CD4-positive, alpha-beta T cell (primary cell): ENCODE measurements at regions of chr1 and their contacts with region 1.

Region 1: DNA sequence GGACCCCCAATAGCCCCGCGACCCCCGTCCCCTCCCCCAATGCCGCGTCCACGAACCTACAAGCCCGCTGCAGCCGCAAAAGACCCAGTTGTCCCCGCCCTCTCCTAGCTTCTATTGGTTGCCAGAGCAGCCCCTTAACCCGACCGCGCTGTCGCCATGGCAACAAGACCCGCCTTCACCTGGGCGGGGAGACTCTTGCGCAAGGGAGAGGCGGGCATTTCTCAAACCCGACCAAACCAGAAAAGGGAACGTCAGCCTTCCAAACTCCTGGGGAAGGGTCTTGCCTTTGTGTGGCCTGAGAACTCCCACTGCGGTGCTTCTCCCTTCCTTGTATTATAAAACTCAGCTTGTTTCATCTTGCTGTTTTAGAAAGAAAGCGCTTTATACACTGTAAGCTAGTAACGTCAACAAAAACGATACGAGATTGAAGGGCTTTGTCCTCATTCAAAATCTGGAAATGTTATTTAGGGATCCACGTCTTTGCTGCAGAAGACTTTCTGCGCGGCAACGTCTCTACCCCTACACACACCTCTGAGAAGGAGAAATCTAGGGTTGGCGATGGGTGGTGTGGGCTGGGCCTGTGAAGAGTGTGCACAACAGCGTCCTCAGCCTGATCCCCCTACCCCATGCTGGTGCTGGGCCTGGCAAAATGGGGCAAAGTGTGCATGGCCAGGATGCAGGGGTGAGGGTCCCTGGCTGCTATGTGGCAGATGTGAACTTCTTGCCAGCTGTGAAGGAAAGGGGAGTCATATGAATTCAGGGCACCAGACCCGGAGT is at the start of gene TMEM9:
- DNase-seq: peak; percentile 97 to 100 (median 99)
- ATAC-seq: peak; percentile 97
- H3K4me3 ChIP-seq: peak within 1 kb of the TSS; percentile 84
- H3K4me3 Mint-ChIP-seq: peak within 1 kb of the TSS; percentile 91
- H3K27ac ChIP-seq: peak within 1 kb of the TSS in 1 of 2 donors; percentile 47
- H3K27ac Mint-ChIP-seq: peak within 1 kb of the TSS; percentile 76
- H3K4me1 ChIP-seq: peaks cover 18% of the 10 kb centered on the region
- H3K4me1 Mint-ChIP-seq: peaks cover 32% of the 10 kb centered on the region
- H3K27me3 ChIP-seq: no peaks in the 10 kb centered on the region
- H3K27me3 Mint-ChIP-seq: peaks cover 10% of the 10 kb centered on the region
- CTCF ChIP-seq: no peak
- total RNA-seq, gene TMEM9: 15.7 to 16.5 TPM

Region 2: GRCh38 chr1:200409761-200410565 is 744.6 kb before region 1 on chr1 and contains the start of gene ZNF281:
- CTCF ChIA-PET with region 1: no interaction called
- POLR2A ChIA-PET with region 1: no interaction called
- intact Hi-C with region 1: loop called in 1 of 2 experiments (anchors 10 kb)
- DNase-seq: peak; percentile 86 to 97 (median 92)
- ATAC-seq: peak; percentile 96
- H3K4me3 ChIP-seq: peak within 1 kb of the TSS; percentile 93
- H3K4me3 Mint-ChIP-seq: peak within 1 kb of the TSS; percentile 98
- H3K27ac ChIP-seq: peak within 1 kb of the TSS; percentile 68 to 81
- H3K27ac Mint-ChIP-seq: peak within 1 kb of the TSS; percentile 87
- H3K4me1 ChIP-seq: peaks cover 25% of the 10 kb centered on the region
- H3K4me1 Mint-ChIP-seq: peaks cover 56% of the 10 kb centered on the region
- H3K27me3 ChIP-seq: no peaks in the 10 kb centered on the region
- H3K27me3 Mint-ChIP-seq: no peaks in the 10 kb centered on the region
- CTCF ChIP-seq: no peak
- total RNA-seq, gene ZNF281: 27.6 to 29.3 TPM

Region 3: GRCh38 chr1:200738740-200739498 is 415.7 kb before region 1 on chr1 and contains the start of gene CAMSAP2:
- CTCF ChIA-PET with region 1: no interaction called
- POLR2A ChIA-PET with region 1: no interaction called
- intact Hi-C with region 1: loop called in 1 of 2 experiments (anchors 10 kb)
- DNase-seq: peak; percentile 30 to 90 (median 60)
- ATAC-seq: peak; percentile 67
- H3K4me3 ChIP-seq: peak within 1 kb of the TSS; percentile 93
- H3K4me3 Mint-ChIP-seq: peak within 1 kb of the TSS; percentile 100
- H3K27ac ChIP-seq: peak within 1 kb of the TSS; percentile 29 to 36
- H3K27ac Mint-ChIP-seq: peak within 1 kb of the TSS; percentile 90
- H3K4me1 ChIP-seq: peaks cover 17% of the 10 kb centered on the region
- H3K4me1 Mint-ChIP-seq: peaks cover 46% of the 10 kb centered on the region
- H3K27me3 ChIP-seq: no peaks in the 10 kb centered on the region
- H3K27me3 Mint-ChIP-seq: no peaks in the 10 kb centered on the region
- CTCF ChIP-seq: no peak
- total RNA-seq, gene CAMSAP2: 4.4 to 5.7 TPM

Region 4: DNA sequence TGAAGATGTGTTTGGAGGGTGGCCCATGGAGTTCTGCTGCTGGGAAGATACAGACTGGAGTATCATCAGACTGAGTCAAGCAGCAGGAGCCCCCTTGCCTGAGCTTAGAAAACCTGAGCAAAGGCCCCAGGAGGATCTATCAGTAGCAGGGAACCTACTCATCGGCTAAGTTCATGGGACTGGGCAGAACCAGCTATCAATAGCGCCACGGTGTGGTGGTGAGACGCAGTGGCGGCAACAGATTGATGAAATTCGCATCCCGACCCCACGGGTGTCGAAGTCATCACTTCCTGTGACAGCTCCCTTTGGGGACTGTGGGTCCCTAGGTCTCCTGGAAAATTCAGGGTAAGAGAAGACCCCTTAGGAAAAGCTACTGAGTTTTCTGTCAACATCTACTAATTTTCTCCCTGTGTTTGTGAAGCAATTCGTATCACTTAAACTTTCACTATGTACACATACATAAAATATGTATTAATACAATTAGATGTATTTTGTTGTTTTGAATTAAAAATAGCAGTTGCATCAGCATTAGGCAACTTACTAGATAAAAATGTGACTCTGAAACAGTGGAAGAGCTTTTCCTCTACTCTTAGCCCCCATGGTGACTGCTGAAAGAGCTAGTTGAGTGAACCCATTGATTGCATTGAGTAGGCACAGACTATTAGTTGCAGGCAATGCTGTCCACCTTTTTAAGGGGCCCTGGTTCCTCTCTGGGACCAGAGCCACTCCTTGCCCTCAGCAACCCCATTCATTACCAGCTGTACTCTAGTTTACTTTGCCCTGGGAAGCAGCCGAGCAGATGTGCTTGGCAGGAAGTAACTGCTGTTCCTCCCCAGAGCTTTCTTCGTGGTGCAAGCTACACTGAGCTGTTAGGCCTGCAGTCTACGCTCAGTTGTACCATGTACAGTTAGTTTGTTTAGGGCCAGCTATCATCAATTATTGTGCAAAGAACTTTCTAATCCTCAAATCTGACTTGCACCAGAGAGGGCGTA is 35.1 kb before region 1 on chr1:
- CTCF ChIA-PET with region 1: interaction called, 6 read pairs
- POLR2A ChIA-PET with region 1: interaction called, 8 read pairs
- intact Hi-C with region 1: loop called in 1 of 2 experiments (anchors 2 kb)
- DNase-seq: peak in 13 of 14 experiments; percentile 22 to 74 (median 42)
- ATAC-seq: peak; percentile 50
- H3K4me3 ChIP-seq: no peak overlapping the region
- H3K4me3 Mint-ChIP-seq: no peak overlapping the region
- H3K27ac ChIP-seq: no peak overlapping the region
- H3K27ac Mint-ChIP-seq: no peak overlapping the region
- H3K4me1 ChIP-seq: peaks cover 14% of the 10 kb centered on the region
- H3K4me1 Mint-ChIP-seq: peaks cover 29% of the 10 kb centered on the region
- H3K27me3 ChIP-seq: peaks cover 3 to 7% of the 10 kb centered on the region in 2 experiments
- H3K27me3 Mint-ChIP-seq: peaks cover 9% of the 10 kb centered on the region
- CTCF ChIP-seq: peak; percentile 47

Region 5: GRCh38 chr1:201131398-201131797 is 23.2 kb before region 1 on chr1:
- CTCF ChIA-PET with region 1: no interaction called
- POLR2A ChIA-PET with region 1: no interaction called
- intact Hi-C with region 1: no loop called
- DNase-seq: no peak
- ATAC-seq: no peak
- H3K4me3 ChIP-seq: no peak overlapping the region
- H3K4me3 Mint-ChIP-seq: no peak overlapping the region
- H3K27ac ChIP-seq: no peak overlapping the region
- H3K27ac Mint-ChIP-seq: no peak overlapping the region
- H3K4me1 ChIP-seq: no peaks in the 10 kb centered on the region
- H3K4me1 Mint-ChIP-seq: no peaks in the 10 kb centered on the region
- H3K27me3 ChIP-seq: peaks cover 2 to 4% of the 10 kb centered on the region in 2 experiments
- H3K27me3 Mint-ChIP-seq: peaks cover 8% of the 10 kb centered on the region
- CTCF ChIP-seq: no peak

Region 6: GRCh38 chr1:201184307-201185122 is 29.9 kb after region 1 on chr1:
- CTCF ChIA-PET with region 1: no interaction called
- POLR2A ChIA-PET with region 1: no interaction called
- intact Hi-C with region 1: loop called in 1 of 2 experiments (anchors 1 kb)
- DNase-seq: peak in 1 of 14 experiments; percentile 29
- ATAC-seq: no peak
- H3K4me3 ChIP-seq: no peak overlapping the region
- H3K4me3 Mint-ChIP-seq: no peak overlapping the region
- H3K27ac ChIP-seq: no peak overlapping the region
- H3K27ac Mint-ChIP-seq: no peak overlapping the region
- H3K4me1 ChIP-seq: no peaks in the 10 kb centered on the region
- H3K4me1 Mint-ChIP-seq: no peaks in the 10 kb centered on the region
- H3K27me3 ChIP-seq: peaks cover 5% of the 10 kb centered on the region in 2 experiments
- H3K27me3 Mint-ChIP-seq: peaks cover 44% of the 10 kb centered on the region
- CTCF ChIP-seq: peak; percentile 25

Region 7: DNA sequence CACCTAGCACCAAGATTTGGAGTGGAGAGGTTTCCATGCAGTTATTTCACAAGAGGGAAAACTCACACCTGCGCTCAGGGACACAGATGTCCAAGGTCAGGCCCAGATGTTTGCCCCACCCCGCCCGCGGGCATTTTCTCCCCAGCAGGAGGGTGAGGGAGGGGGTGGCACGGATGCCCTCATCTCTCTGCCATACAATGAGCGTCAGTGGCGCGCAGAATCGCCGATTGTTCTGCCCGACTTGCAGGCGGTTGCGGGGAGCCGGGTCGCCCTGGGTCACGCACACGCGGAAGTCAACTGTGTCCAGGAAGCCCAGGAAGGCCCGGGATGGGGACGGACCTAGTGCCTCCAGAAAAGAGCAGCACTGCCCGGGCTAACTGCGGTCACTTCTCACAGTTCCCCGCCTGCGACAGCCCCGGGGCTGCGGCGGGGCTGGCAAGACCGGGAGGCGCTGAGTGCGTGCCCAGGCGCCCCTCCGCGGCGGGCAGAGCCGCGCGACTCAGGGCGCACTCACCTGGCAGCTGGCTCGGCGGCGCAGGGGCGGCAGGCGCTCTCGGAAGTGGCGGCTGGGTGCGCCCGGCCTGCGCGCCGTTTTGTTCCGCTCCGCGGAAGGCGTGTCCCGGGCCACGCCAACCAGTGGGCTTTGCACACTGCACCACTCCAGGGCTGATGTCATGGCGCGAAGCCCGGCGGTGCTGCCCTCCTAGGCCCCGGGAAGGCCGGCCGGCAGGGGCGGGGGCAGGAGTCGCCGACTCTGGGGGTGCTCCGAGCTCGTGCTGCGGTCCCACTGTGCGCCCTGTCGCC is 352.2 kb after region 1 on chr1 and contains the start of gene CSRP1:
- CTCF ChIA-PET with region 1: no interaction called
- POLR2A ChIA-PET with region 1: no interaction called
- intact Hi-C with region 1: loop called in 1 of 2 experiments (anchors 10 kb)
- DNase-seq: peak; percentile 66 to 91 (median 77)
- ATAC-seq: peak; percentile 95
- H3K4me3 ChIP-seq: peak within 1 kb of the TSS; percentile 82
- H3K4me3 Mint-ChIP-seq: peak within 1 kb of the TSS; percentile 96
- H3K27ac ChIP-seq: peak within 1 kb of the TSS; percentile 37 to 58
- H3K27ac Mint-ChIP-seq: peak within 1 kb of the TSS; percentile 86
- H3K4me1 ChIP-seq: peaks cover 40% of the 10 kb centered on the region
- H3K4me1 Mint-ChIP-seq: peaks cover 49% of the 10 kb centered on the region
- H3K27me3 ChIP-seq: no peaks in the 10 kb centered on the region
- H3K27me3 Mint-ChIP-seq: no peaks in the 10 kb centered on the region
- CTCF ChIP-seq: peak; percentile 20
- total RNA-seq, gene CSRP1: 34.8 to 39.9 TPM

Region 8: DNA sequence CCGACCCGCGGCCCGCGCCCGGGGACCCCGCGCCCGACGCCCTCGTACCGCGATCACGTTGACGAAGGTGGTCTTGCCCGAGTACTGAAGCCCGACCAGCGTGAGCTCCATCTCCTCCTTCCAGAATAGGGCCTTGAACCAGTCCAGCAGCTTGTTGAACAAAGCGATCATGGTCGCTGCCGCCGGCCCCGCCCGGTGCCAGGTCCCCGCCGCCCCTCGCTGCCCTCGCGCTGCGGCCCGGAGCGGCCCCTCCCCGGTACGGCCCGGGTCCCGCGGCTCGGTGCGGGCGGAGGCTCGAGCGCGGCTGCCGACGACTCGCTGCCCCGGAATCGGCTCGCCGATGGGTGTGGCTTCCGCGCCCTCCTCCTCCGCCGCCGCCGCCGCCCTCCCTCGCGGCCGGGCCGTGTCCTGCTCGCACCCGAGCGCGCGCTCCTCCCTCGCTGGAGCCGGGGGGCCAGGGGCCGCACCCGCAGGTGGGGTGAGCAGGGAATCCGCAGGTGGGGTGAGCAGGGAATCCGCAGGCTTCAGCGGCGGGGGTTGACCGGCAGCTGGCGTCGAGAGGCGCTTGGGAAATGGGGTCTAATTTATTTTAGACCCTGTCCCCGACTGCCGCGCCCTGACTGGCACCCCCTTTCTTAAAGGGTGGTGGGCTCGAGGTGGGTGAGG is 990.0 kb after region 1 on chr1 and contains the start of gene ARL8A:
- CTCF ChIA-PET with region 1: no interaction called
- POLR2A ChIA-PET with region 1: no interaction called
- intact Hi-C with region 1: loop called in 1 of 2 experiments (anchors 10 kb)
- DNase-seq: peak; percentile 35 to 83 (median 65)
- ATAC-seq: peak; percentile 75
- H3K4me3 ChIP-seq: peak within 1 kb of the TSS; percentile 89
- H3K4me3 Mint-ChIP-seq: peak within 1 kb of the TSS; percentile 97
- H3K27ac ChIP-seq: peak within 1 kb of the TSS; percentile 69 to 71
- H3K27ac Mint-ChIP-seq: peak within 1 kb of the TSS; percentile 94
- H3K4me1 ChIP-seq: peaks cover 40% of the 10 kb centered on the region
- H3K4me1 Mint-ChIP-seq: peaks cover 45% of the 10 kb centered on the region
- H3K27me3 ChIP-seq: no peaks in the 10 kb centered on the region
- H3K27me3 Mint-ChIP-seq: no peaks in the 10 kb centered on the region
- CTCF ChIP-seq: no peak
- total RNA-seq, gene ARL8A: 73.5 to 73.8 TPM